Heart right ventricle (tissue), 16 donors: ENCODE measurements at regions of chr11 and their contacts with region 1.

Region 1: DNA sequence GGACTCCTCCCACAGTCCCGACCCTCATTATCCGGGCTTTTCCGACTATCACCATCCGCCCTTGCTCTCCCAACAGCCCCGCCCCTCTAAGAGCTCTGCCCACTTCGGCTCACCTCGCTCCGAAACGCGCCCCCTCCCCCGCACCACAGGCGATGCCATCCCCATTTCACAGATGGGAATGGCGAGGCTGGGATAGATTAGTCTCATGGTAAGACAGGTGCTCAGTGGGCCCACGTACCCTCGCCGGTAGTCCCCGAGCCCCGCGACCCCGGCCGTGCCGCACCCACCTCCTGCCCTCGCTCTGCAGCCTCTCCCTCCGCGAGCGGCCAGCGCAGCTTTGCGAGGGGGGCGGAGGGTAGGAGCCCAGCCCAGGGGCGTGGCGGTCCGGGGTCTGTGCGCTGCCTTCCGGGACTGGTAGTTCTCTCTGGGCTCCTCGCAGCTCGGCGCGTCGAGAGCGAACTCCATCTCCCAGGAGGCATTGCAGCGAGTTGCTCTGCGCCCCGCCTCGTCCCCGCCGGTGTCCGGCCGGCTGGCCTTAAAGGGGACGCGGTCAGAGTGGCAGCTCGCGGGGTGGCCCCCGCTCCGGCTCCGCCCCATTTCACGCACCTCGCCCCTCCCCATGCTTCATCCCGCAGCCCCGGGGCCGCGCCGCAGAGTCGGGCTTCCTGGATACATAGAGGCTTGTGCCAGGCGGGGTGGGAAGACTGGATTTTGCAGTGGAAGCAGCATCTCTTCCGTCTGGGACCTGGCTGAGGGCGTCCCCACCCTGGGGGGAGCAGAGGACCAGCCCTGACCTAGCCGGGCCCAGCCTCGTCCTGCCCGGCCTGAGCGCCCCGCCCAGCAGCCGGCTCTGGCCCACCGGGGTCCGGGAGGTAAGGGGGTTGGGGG is at the starts of genes KCTD21 and USP35:
- DNase-seq: peak; percentile 97 to 98
- ATAC-seq: peak; percentile 97 to 98 (median 98)
- H3K4me3 ChIP-seq: peak within 1 kb of the TSS; percentile 68 to 89 (median 82)
- H3K27ac ChIP-seq: peak within 1 kb of the TSS; percentile 34 to 90 (median 84)
- H3K4me1 ChIP-seq: peaks cover 6 to 59% (median 36%) of the 10 kb centered on the region in 9 donors
- H3K27me3 ChIP-seq: no peaks in the 10 kb centered on the region
- CTCF ChIP-seq: no peak
- total RNA-seq, gene KCTD21: 4.2 to 9.9 (median 6.7) TPM
- total RNA-seq, gene USP35: 3.6 to 6.6 (median 5.2) TPM

Region 2: DNA sequence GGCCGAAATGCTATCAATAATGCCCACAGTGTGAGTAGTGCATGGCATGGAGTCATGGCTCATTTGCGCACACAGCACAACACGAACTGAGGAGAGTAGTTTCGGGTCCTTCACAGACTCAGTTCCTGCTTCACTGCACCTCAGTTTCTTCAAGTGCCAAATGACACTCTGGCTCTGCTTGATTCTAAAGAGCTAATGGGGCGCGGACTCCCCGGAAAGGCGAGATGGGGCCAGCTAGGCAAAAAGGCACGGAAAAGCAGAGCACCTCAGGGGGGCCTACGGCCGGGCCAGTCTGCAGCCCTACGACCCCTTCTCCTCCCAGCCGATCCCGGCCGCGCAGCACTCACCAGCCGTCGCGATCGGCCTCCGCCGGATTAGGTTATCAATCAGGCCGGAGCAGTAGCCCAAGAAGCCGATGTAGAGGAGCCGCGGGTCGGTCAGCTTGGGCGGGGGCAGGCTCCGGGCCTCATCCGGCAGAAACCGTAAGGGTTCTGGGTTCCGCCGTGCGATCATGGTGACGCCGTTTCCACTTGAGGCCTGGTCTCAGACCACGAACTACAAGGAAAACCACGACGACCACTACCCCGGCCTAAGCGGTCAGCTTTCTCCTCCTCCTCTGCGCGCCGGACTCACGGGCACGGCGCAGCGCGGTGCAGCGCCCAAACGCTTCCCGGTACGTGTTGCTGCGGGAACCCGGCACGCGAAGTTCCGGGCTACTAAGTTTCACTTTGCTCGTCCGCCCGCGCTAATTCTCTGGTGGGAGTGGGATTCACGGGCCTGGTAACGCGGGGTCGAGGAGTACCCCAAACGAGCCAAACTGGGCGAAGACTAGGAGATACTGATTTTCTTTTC is 109.1 kb before region 1 on chr11 and contains the start of gene NDUFC2:
- intact Hi-C with region 1: loop called in 1 of 10 experiments (anchors 5 kb)
- DNase-seq: peak; percentile 75 to 82
- ATAC-seq: peak; percentile 93 to 96 (median 95)
- H3K4me3 ChIP-seq: peak within 1 kb of the TSS; percentile 65 to 92 (median 86)
- H3K27ac ChIP-seq: peak within 1 kb of the TSS; percentile 47 to 95 (median 90)
- H3K4me1 ChIP-seq: peaks cover 6 to 52% (median 41%) of the 10 kb centered on the region in 9 donors
- H3K27me3 ChIP-seq: no peaks in the 10 kb centered on the region
- CTCF ChIP-seq: peak in 1 of 9 donors; percentile 4
- total RNA-seq, gene NDUFC2: 242 to 400 (median 275) TPM

Region 3: DNA sequence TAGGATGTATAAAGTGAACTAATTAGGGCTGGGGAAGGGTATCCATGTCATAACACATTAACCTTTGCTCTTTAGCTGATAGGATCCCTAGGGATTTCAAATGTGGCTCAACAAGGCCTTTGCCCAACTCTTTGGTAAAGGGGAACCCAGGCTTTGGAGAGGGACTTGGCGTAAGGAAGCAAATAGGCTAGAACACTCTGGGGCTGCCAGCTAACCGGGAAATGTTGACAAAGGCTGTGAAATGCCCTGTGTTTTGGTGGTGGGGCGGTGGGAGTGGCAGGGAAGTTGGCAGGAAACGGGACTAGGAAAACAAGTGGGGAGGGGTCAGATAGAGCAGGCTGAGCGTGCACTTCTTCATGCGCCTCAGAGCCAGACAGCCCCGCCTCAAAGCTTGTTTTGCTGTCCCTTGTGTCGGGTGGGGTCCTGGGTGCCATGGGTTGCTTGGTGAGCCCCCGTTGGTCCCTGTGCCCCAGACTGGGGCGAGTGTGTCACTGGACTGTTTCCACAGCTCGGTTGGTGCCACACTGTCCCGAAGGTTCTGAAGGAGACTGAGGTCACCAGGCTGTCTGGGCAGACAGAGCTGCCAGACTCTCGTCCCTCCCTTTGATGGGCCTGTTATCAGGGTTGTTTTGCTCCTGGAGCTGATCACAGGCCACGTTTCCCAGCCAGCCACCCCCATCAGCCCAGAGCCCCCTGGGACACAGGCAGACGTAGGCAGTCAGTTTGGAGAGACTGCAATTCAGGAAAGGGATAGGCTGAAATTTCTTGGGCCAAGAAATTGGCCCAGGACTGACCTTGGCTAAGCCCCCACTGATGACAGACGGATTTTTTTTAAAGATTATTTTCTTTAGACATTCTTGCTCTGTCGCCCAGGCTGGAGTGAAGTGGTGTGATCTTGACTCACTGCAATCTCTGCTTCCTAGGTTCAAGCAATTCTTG is 19.7 kb before region 1 on chr11:
- intact Hi-C with region 1: loop called in 1 of 10 experiments (anchors 2 kb)
- DNase-seq: peak; percentile 87 to 90
- ATAC-seq: peak; percentile 91 to 95 (median 94)
- H3K4me3 ChIP-seq: no peak overlapping the region
- H3K27ac ChIP-seq: peak overlapping the region; percentile 70 to 92 (median 86)
- H3K4me1 ChIP-seq: peaks cover 14 to 45% (median 32%) of the 10 kb centered on the region in 9 donors
- H3K27me3 ChIP-seq: no peaks in the 10 kb centered on the region
- CTCF ChIP-seq: no peak

Region 4: GRCh38 chr11:78228467-78228866 is 39.9 kb after region 1 on chr11:
- intact Hi-C with region 1: no loop called
- DNase-seq: peak in 1 of 2 donors; percentile 55
- ATAC-seq: peak; percentile 53 to 80 (median 64)
- H3K4me3 ChIP-seq: no peak overlapping the region
- H3K27ac ChIP-seq: peak overlapping the region in 1 of 10 donors; percentile 10
- H3K4me1 ChIP-seq: peaks cover 0 to 46% (median 34%) of the 10 kb centered on the region in 9 donors
- H3K27me3 ChIP-seq: no peaks in the 10 kb centered on the region
- CTCF ChIP-seq: peak; percentile 31 to 81 (median 63)